ENCODE measurements at regions of chr16 and their contacts with region 1.

Region 1: DNA sequence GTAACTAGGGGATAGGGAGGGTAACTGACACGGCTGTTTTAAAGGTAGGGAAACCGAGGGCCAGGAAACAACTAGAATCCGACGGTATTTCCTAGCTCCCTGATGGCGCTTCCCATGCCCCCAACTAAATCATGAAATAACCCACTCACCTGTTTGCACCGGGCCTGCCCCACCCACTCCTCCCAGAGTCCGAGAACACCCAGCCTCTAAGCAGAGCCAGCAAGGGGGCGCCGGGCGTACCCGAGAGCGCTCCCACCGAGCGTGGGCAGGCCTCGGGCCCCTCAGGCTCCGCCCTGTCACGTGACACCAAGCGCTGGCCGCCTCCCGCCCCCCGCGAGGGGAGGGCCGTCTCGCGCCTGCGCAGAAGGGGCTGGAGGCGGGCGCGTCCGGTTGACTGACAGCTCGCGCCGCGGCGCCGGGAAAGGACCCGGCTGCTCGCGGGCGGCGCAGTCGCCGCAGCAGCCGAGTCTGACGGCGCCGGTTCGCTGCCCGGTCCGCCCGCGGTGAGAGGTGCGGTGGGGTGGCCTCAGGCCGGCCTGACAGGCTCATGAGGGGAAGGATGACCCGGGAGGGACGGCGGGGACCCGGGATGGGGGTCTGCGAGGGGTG is at the start of gene KIAA0513:
- DNase-seq: peak; percentile 98
- ATAC-seq: peak; percentile 43
- H3K4me3 Mint-ChIP-seq: peak within 1 kb of the TSS; percentile 83
- H3K27ac Mint-ChIP-seq: peak within 1 kb of the TSS; percentile 97
- H3K4me1 Mint-ChIP-seq: peaks cover 37% of the 10 kb centered on the region
- H3K27me3 Mint-ChIP-seq: no peaks in the 10 kb centered on the region
- total RNA-seq, gene KIAA0513: 9.6 to 10.4 TPM

Region 2: DNA sequence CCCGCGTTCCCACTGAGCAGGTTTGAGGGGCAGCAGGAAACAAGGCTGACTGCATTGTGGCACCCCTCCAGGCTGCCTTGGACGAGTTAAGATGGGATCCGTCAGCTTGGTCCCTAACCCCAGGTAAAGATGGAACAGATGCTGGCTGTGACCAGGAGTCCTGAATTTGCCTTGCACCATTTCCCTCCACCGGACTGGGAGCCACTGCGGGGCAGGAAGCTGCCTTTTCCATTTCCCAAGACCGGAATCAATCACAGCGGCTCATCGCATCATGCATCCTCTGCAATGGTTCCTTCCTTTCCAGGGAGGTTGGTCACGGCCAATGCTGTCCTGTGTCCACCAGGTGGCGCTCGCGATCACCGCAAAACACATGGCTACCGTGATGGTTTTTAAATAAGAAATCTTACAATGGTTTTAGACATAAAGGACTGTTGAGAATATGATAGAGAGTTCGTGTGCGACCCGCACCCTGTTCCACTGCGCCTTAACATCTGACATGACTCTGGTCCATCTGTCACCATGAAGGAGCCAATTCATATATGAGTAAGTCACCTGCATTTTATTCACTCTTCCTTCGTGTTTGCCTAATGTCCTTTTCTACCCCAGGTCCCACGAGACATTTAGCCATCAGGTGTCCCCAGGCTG is 516.2 kb before region 1 on chr16:
- CTCF ChIA-PET with region 1: no interaction called
- POLR2A ChIA-PET with region 1: no interaction called
- intact Hi-C with region 1: loop called (anchors 5 kb)
- DNase-seq: peak; percentile 94
- ATAC-seq: peak; percentile 23
- H3K4me3 Mint-ChIP-seq: no peak overlapping the region
- H3K27ac Mint-ChIP-seq: peak overlapping the region; percentile 26
- H3K4me1 Mint-ChIP-seq: peaks cover 69% of the 10 kb centered on the region
- H3K27me3 Mint-ChIP-seq: no peaks in the 10 kb centered on the region

Region 3: GRCh38 chr16:84699712-84700445 is 327.6 kb before region 1 on chr16 and contains the start of gene USP10:
- CTCF ChIA-PET with region 1: no interaction called
- POLR2A ChIA-PET with region 1: no interaction called
- intact Hi-C with region 1: loop called in 1 of 2 experiments (anchors 1 kb)
- DNase-seq: peak; percentile 90
- ATAC-seq: peak; percentile 83
- H3K4me3 Mint-ChIP-seq: peak within 1 kb of the TSS; percentile 89
- H3K27ac Mint-ChIP-seq: peak within 1 kb of the TSS; percentile 97
- H3K4me1 Mint-ChIP-seq: peaks cover 38% of the 10 kb centered on the region
- H3K27me3 Mint-ChIP-seq: no peaks in the 10 kb centered on the region
- total RNA-seq, gene USP10: 117 to 133 TPM

Region 4: GRCh38 chr16:85055503-85056210 is 28.2 kb after region 1 on chr16:
- CTCF ChIA-PET with region 1: interaction called, 11 read pairs
- POLR2A ChIA-PET with region 1: interaction called, 5 read pairs
- intact Hi-C with region 1: loop called (anchors 1 kb)
- DNase-seq: peak; percentile 88
- ATAC-seq: peak; percentile 92
- H3K4me3 Mint-ChIP-seq: peak overlapping the region; percentile 61
- H3K27ac Mint-ChIP-seq: peak overlapping the region; percentile 88
- H3K4me1 Mint-ChIP-seq: peaks cover 57% of the 10 kb centered on the region
- H3K27me3 Mint-ChIP-seq: no peaks in the 10 kb centered on the region

Region 5: GRCh38 chr16:85610508-85611332 is 583.3 kb after region 1 on chr16:
- CTCF ChIA-PET with region 1: no interaction called
- POLR2A ChIA-PET with region 1: no interaction called
- intact Hi-C with region 1: loop called in 1 of 2 experiments (anchors 2 kb)
- DNase-seq: peak; percentile 94
- ATAC-seq: peak; percentile 72
- H3K4me3 Mint-ChIP-seq: peak overlapping the region; percentile 59
- H3K27ac Mint-ChIP-seq: no peak overlapping the region
- H3K4me1 Mint-ChIP-seq: peaks cover 27% of the 10 kb centered on the region
- H3K27me3 Mint-ChIP-seq: peaks cover 9% of the 10 kb centered on the region

Region 6: GRCh38 chr16:86319585-86320270 is 1292.3 kb after region 1 on chr16:
- CTCF ChIA-PET with region 1: no interaction called
- POLR2A ChIA-PET with region 1: no interaction called
- intact Hi-C with region 1: no loop called
- DNase-seq: peak; percentile 41
- ATAC-seq: no peak
- H3K4me3 Mint-ChIP-seq: no peak overlapping the region
- H3K27ac Mint-ChIP-seq: no peak overlapping the region
- H3K4me1 Mint-ChIP-seq: no peaks in the 10 kb centered on the region
- H3K27me3 Mint-ChIP-seq: peaks cover 2% of the 10 kb centered on the region

Region 7: GRCh38 chr16:86554917-86555703 is 1527.7 kb after region 1 on chr16 and contains the start of gene MTHFSD:
- CTCF ChIA-PET with region 1: no interaction called
- POLR2A ChIA-PET with region 1: no interaction called
- intact Hi-C with region 1: loop called in 1 of 2 experiments (anchors 10 kb)
- DNase-seq: peak; percentile 97
- ATAC-seq: peak; percentile 95
- H3K4me3 Mint-ChIP-seq: peak within 1 kb of the TSS; percentile 77
- H3K27ac Mint-ChIP-seq: peak within 1 kb of the TSS; percentile 93
- H3K4me1 Mint-ChIP-seq: peaks cover 13% of the 10 kb centered on the region
- H3K27me3 Mint-ChIP-seq: peaks cover 6% of the 10 kb centered on the region
- total RNA-seq, gene MTHFSD: 21.2 to 22.1 TPM

Measured in activated CD4-positive, alpha-beta T cell treated with anti-CD3 and anti-CD28 coated beads for 36 hours (primary cell).